ENCODE measurements at regions of chr14 and their contacts with region 1.

Region 1: GRCh38 chr14:64294672-64295413 is 672 bp upstream of the ESR2 start:
- DNase-seq: peak; percentile 68 to 85 (median 72)
- H3K4me3 ChIP-seq: peak overlapping the region; percentile 55
- H3K4me3 Mint-ChIP-seq: peak overlapping the region; percentile 74 to 90 (median 77)
- H3K27ac ChIP-seq: no peak overlapping the region
- H3K27ac Mint-ChIP-seq: peak overlapping the region in 2 of 8 donors; percentile 33 to 35
- H3K4me1 ChIP-seq: peaks cover 10% of the 10 kb centered on the region
- H3K4me1 Mint-ChIP-seq: peaks cover 11 to 20% (median 17%) of the 10 kb centered on the region in 3 donors
- H3K27me3 ChIP-seq: peaks cover 4% of the 10 kb centered on the region
- H3K27me3 Mint-ChIP-seq: peaks cover 16 to 31% of the 10 kb centered on the region in 2 donors

Region 2: GRCh38 chr14:63800651-63801375 is 494.0 kb before region 1 on chr14:
- CTCF ChIA-PET with region 1: interaction called, 10 read pairs
- POLR2A ChIA-PET with region 1: no interaction called
- DNase-seq: no peak
- H3K4me3 ChIP-seq: no peak overlapping the region
- H3K4me3 Mint-ChIP-seq: no peak overlapping the region
- H3K27ac ChIP-seq: no peak overlapping the region
- H3K27ac Mint-ChIP-seq: peak overlapping the region in 1 of 8 donors; percentile 17
- H3K4me1 ChIP-seq: no peaks in the 10 kb centered on the region
- H3K4me1 Mint-ChIP-seq: peaks cover 2 to 13% (median 10%) of the 10 kb centered on the region in 3 donors
- H3K27me3 ChIP-seq: no peaks in the 10 kb centered on the region
- H3K27me3 Mint-ChIP-seq: peaks cover 0 to 1% of the 10 kb centered on the region in 2 donors

Region 3: GRCh38 chr14:64279704-64280668 is 14.9 kb before region 1 on chr14:
- CTCF ChIA-PET with region 1: interaction called, 11 read pairs
- POLR2A ChIA-PET with region 1: no interaction called
- DNase-seq: no peak
- H3K4me3 ChIP-seq: no peak overlapping the region
- H3K4me3 Mint-ChIP-seq: no peak overlapping the region
- H3K27ac ChIP-seq: no peak overlapping the region
- H3K27ac Mint-ChIP-seq: no peak overlapping the region
- H3K4me1 ChIP-seq: peaks cover 5% of the 10 kb centered on the region
- H3K4me1 Mint-ChIP-seq: peaks cover 0 to 7% (median 3%) of the 10 kb centered on the region in 3 donors
- H3K27me3 ChIP-seq: no peaks in the 10 kb centered on the region
- H3K27me3 Mint-ChIP-seq: peaks cover 6 to 9% of the 10 kb centered on the region in 2 donors

Region 4: DNA sequence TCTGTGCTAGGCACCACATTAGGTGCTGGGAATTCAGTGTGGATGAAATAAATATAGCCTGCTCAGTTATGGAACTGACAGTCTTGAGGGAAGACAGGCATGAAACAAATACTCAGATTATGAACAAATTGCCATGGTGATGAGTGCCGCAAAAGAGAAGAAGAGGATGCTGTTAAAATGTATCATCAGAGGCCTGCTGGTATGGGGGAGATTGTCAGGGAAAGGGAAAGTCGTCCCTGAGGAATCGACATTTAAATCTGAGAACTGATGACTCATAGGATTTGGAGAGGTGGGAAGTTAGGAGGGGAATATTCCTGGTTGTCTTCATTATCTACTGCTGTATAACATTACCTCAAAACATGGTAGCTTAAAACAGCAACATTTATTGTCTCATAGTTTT is 297.0 kb after region 1 on chr14:
- CTCF ChIA-PET with region 1: no interaction called
- POLR2A ChIA-PET with region 1: no interaction called
- DNase-seq: no peak
- H3K4me3 ChIP-seq: no peak overlapping the region
- H3K4me3 Mint-ChIP-seq: no peak overlapping the region
- H3K27ac ChIP-seq: no peak overlapping the region
- H3K27ac Mint-ChIP-seq: no peak overlapping the region
- H3K4me1 ChIP-seq: no peaks in the 10 kb centered on the region
- H3K4me1 Mint-ChIP-seq: no peaks in the 10 kb centered on the region
- H3K27me3 ChIP-seq: no peaks in the 10 kb centered on the region
- H3K27me3 Mint-ChIP-seq: peaks cover 0 to 6% of the 10 kb centered on the region in 2 donors